Mammary epithelial cell (primary cell): ENCODE measurements at regions of chr3 and their contacts with region 1.

Region 1: DNA sequence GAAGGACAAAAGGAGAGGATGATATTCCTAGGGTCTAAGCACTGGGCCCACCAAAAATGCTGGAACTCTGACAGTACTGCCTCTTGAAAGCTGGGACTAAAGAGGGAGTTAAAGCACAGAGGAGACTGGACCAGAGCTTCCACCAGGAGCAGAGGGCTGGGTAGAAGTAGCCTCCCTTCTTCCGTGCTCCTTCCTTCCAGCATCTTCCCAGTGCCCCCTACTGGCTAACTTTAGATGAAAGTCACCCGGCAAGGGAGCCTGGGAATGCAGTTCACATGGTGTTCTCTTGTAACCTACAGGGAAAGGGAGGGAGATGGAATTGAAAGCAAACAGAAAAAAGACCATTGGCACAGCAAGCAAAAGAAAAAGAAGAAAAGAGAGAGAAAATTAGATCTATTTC is 106.1 kb upstream of the COL8A1 start:
- DNase-seq: peak; percentile 54
- H3K4me3 ChIP-seq: no peak overlapping the region
- H3K27ac ChIP-seq: no peak overlapping the region
- H3K4me1 ChIP-seq: peaks cover 12% of the 10 kb centered on the region
- H3K27me3 ChIP-seq: no peaks in the 10 kb centered on the region
- CTCF ChIP-seq: peak; percentile 60 to 86

Region 2: DNA sequence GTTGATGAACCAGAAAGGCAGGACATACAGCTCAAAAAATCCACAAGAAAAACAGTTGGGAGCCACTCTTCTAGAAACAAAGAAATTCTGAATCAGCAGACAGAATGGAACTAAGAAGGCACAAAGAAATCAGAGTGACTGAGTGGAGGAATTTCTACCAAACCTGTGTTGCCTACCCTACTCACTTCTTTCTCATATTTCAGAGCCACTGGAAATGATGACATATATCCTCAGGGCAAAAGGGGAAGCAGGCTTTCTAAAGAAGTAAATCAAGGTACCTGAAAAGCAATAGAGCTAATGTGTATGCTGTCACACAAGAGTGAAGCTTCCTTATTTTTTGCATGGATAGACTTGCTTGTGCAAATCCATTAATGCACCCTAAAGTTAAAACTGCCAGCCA is 1972.9 kb before region 1 on chr3:
- CTCF ChIA-PET with region 1: no interaction called
- dilution Hi-C with region 1: no loop called
- in situ Hi-C with region 1: no loop called
- intact Hi-C with region 1: no loop called
- DNase-seq: no peak
- H3K4me3 ChIP-seq: no peak overlapping the region
- H3K27ac ChIP-seq: no peak overlapping the region
- H3K4me1 ChIP-seq: no peaks in the 10 kb centered on the region
- H3K27me3 ChIP-seq: no peaks in the 10 kb centered on the region
- CTCF ChIP-seq: no peak

Region 3: GRCh38 chr3:99172736-99173657 is 359.2 kb before region 1 on chr3:
- CTCF ChIA-PET with region 1: no interaction called
- dilution Hi-C with region 1: no loop called
- in situ Hi-C with region 1: no loop called
- intact Hi-C with region 1: loop called (anchors 10 kb)
- DNase-seq: peak; percentile 60
- H3K4me3 ChIP-seq: no peak overlapping the region
- H3K27ac ChIP-seq: no peak overlapping the region
- H3K4me1 ChIP-seq: no peaks in the 10 kb centered on the region
- H3K27me3 ChIP-seq: no peaks in the 10 kb centered on the region
- CTCF ChIP-seq: peak; percentile 82 to 84

Region 4: DNA sequence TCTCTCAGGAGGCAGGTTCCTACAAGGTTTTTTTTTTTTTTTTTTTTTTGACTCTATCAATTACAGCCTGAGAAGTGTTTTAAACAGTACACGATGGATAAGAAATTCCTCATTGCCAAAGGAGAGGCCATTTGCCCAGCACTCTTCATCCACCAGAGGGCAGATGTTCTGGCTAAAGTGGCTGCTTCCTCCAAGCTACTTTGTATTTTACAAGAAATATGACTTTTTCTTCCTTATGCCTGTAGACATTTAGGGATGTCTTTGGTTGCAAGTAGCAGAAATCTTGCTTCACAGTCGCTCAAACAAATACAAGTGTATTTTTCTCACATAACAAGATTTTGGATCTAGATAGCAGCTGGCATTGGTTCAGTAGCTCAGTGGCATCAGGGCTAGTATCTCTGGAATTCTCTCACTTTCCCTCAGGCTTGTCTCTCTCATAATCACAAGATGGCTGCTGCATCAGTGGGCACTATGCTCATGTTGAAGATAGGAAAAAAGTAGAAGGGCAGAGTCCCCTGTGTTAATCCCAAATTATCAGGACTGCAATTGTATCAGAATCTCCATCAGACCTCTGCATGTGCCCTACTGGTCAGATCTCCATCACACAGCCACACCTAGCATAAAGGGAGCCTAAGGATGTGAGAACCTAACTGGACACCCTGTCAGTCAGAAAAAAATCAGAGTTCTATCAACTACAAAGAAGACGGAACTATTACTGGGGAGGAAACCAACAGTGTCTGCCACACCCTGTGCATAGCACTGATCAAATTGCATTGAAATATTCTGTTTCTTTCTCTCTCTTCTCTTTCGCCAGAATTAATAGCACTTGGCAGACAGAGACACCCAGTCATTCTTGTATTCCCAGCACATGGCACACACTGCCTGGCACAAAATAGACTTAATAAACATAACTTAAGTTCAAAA is 32.7 kb before region 1 on chr3:
- CTCF ChIA-PET with region 1: no interaction called
- dilution Hi-C with region 1: no loop called
- in situ Hi-C with region 1: no loop called
- intact Hi-C with region 1: loop called (anchors 1 kb)
- DNase-seq: peak; percentile 28
- H3K4me3 ChIP-seq: no peak overlapping the region
- H3K27ac ChIP-seq: no peak overlapping the region
- H3K4me1 ChIP-seq: no peaks in the 10 kb centered on the region
- H3K27me3 ChIP-seq: no peaks in the 10 kb centered on the region
- CTCF ChIP-seq: peak; percentile 84 to 88

Region 5: DNA sequence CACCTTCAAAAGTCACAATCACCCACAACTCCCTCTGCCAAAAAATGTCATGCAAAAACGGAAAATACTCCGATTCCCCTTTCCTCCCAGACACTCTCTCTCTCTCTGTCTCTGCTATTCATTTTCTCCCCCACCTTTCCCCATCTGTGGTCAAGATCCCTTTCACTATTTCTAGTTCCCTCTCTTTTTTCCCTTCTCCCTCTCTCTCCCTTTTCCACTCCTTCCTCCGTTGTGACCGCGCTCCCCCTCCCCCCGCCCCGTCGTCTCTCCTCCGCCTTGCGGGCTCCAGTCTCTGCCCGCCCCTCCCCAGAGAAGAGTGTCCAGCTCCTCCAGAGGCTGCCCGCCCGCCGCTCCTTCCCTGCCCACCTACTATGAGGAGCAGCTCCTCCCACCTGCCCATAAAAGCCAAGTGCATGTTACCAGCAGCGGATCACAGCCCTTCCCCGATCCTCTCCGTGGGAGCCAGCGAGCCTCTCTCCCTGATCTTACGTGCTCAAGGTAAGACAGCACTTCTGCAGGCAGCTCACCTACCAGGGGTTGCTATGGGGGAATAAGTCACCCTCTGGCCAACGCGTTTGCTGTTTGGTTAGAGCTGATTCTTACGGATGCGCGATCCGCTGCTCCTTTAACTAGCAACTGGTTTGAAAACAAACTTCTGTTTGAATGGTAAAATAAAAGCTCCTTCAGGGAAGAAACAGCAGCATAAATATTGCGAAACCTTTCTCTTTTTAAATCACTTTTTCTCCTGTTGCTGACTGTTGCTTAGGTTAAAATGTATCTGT is 106.1 kb after region 1 on chr3 and contains the start of gene COL8A1:
- CTCF ChIA-PET with region 1: no interaction called
- dilution Hi-C with region 1: no loop called
- in situ Hi-C with region 1: no loop called
- intact Hi-C with region 1: loop called (anchors 5 kb)
- DNase-seq: peak; percentile 83
- H3K4me3 ChIP-seq: peak within 1 kb of the TSS; percentile 48 to 71 (median 67)
- H3K27ac ChIP-seq: peak within 1 kb of the TSS; percentile 84
- H3K4me1 ChIP-seq: peaks cover 28% of the 10 kb centered on the region
- H3K27me3 ChIP-seq: no peaks in the 10 kb centered on the region
- CTCF ChIP-seq: no peak
- total RNA-seq, gene COL8A1: 11.9 to 73.2 TPM